Head of caudate nucleus (tissue), 42 donors: ENCODE measurements at regions of chr7 and their contacts with region 1.

Region 1: GRCh38 chr7:151696721-151697514 is 177.2 kb upstream of the RHEB start:
- DNase-seq: peak in 2 of 42 donors; percentile 50 to 54

Region 2: DNA sequence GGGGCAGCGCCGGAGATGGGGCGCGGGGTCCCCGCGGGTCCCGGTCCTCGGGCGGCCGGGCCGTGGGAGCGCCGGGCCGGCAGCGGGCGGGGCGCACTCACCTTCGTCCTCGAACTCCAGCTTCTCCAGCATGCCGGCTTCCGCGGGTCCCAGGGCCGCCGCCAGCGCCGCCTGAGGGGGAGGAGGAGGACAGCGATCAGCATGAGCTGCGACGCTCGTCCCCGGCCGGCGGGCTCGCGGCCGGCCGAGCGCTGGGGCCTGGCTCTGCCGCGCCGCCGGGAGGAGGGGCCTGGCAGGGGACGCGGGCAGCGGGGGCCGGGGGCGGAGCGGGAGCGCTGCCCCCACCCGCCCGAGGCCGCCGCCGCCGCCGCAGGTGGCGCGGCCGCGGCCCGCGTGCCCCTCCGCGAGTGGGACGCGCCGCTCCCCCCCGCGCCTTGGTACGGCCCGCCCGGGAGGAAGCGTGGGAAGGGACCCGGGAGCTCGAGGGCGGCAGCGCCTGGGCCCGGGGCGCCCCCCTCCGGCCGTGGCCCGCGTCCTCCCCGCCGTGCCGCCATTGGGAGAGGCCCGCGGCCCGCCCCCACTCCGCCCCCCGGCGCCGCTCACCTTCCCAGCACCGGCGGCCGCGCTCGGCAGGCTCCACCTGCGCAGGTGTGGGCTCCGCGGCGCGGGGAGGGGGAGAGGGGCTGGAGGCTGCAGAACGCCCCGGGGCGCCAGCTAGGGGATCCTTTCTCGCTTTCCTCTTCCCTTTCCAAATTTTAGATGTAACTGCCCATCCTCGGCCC is 64.8 kb before region 1 on chr7:
- intact Hi-C with region 1: loop called (anchors 10 kb)
- DNase-seq: peak; percentile 24 to 92 (median 82)

Region 3: GRCh38 chr7:151658778-151659177 is 38.1 kb before region 1 on chr7:
- intact Hi-C with region 1: no loop called
- DNase-seq: no peak